Psoas muscle (tissue), 8 donors: ENCODE measurements at regions of chr1 and their contacts with region 1.

Region 1: GRCh38 chr1:185244015-185244747 is 72.9 kb downstream of the IVNS1ABP start:
- DNase-seq: no peak
- ATAC-seq: no peak
- H3K4me3 ChIP-seq: no peak overlapping the region
- H3K27ac ChIP-seq: no peak overlapping the region
- H3K4me1 ChIP-seq: peaks cover 3% of the 10 kb centered on the region
- H3K27me3 ChIP-seq: no peaks in the 10 kb centered on the region
- CTCF ChIP-seq: no peak

Region 2: DNA sequence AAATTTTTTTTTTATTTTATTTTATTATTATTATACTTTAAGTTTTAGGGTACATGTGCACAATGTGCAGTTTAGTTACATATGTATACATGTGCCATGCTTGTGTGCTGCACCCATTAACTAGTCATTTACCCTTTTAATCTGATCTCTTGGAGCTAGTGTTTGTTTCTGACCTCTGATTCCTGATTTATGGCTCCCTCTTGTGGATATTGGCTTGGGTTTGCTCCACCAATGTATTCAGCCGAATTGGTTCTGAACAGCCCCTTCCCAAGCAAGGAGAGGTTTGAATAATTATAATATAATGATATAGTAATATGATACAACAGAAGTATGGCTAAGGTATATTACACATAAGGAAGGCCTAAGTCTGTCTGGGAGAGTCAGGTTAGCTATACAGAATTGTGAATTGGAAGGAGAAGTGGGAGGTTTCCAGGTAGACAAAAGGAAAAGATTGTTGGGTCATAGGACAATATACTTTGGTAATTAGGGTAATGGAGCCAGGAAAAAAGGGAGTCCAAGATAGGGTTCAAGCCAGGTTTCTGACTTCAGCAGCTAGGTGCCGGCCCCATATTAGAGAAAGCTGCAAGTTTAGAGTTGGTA is 437.0 kb after region 1 on chr1:
- intact Hi-C with region 1: loop called in 1 of 2 experiments (anchors 10 kb)
- DNase-seq: no peak
- ATAC-seq: peak in 2 of 4 donors; percentile 50 to 58
- H3K4me3 ChIP-seq: no peak overlapping the region
- H3K27ac ChIP-seq: no peak overlapping the region
- H3K4me1 ChIP-seq: no peaks in the 10 kb centered on the region
- H3K27me3 ChIP-seq: no peaks in the 10 kb centered on the region
- CTCF ChIP-seq: peak; percentile 52